HAP-1 (cell line): ENCODE measurements at regions of chr10 and their contacts with region 1.

Region 1: DNA sequence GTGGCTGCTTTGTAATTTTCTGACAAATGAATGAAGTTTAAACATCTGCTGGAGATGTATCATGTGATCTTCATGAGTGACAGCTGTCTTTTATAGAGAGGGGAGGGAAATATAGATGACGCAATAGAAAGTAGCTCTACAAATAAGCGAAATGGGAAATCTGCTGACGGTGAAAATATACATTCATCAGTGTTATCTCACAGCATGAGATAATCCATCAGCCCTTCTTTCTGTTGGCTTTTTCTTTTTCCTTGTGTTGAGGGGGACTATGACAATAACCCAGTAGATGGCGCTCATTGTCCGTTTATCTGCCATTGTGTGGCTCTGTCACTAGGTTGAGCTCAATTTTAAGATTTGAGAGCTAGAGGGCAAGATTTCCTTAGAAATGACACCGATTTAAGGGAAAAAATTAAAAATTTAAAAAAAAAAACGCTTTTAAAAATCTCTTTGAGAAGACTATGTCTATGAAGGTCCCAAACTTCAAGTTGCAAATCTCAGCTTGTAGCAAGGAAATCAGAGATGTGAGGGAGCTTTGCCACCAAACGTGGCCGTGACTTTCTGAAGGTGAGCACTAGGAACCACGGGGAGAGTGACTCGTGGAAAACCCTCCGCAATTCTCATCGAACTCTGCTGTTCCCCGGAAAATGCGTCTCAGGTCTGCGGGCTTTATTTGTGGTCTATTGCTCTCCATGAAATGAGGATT is 114.6 kb upstream of the SFMBT2 start:
- DNase-seq: peak; percentile 63 to 74
- H3K4me3 ChIP-seq: no peak overlapping the region
- H3K4me1 ChIP-seq: no peaks in the 10 kb centered on the region
- H3K27me3 ChIP-seq: peaks cover 31% of the 10 kb centered on the region

Region 2: DNA sequence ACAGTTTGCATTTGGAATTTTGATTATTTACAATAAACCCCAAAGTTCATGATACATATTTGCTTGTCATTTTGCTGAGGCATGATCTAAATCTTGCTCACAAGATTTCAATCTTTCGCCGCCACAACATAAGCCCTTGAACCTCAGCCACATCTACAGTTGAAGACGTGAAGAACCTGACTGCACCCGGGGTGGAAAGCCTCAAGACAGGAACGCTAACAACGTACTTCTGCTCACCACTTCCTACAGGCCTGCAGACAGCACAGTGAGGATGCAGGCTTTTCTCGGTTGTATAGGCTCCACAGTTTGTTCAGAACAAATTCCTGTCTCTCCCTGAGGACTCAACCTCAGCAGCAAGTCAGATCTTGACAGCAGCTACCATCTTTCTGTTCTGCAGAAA is 551.6 kb before region 1 on chr10:
- in situ Hi-C with region 1: no loop called
- DNase-seq: no peak
- H3K4me3 ChIP-seq: no peak overlapping the region
- H3K4me1 ChIP-seq: peaks cover 17% of the 10 kb centered on the region
- H3K27me3 ChIP-seq: no peaks in the 10 kb centered on the region

Region 3: GRCh38 chr10:7388602-7389001 is 136.9 kb before region 1 on chr10:
- in situ Hi-C with region 1: no loop called
- DNase-seq: no peak
- H3K4me3 ChIP-seq: no peak overlapping the region
- H3K4me1 ChIP-seq: peaks cover 16% of the 10 kb centered on the region; the same call in 1 of the 2 replicates
- H3K27me3 ChIP-seq: no peaks in the 10 kb centered on the region

Region 4: GRCh38 chr10:7687228-7687907 is 161.9 kb after region 1 on chr10:
- in situ Hi-C with region 1: loop called (anchors 10 kb)
- DNase-seq: peak; percentile 88 to 92
- H3K4me3 ChIP-seq: no peak overlapping the region
- H3K4me1 ChIP-seq: peaks cover 4% of the 10 kb centered on the region; the same call in 1 of the 2 replicates
- H3K27me3 ChIP-seq: peaks cover 3% of the 10 kb centered on the region; the same call in 1 of the 2 replicates

Region 5: GRCh38 chr10:7932301-7933036 is 407.0 kb after region 1 on chr10:
- in situ Hi-C with region 1: no loop called
- DNase-seq: no peak
- H3K4me3 ChIP-seq: no peak overlapping the region
- H3K4me1 ChIP-seq: no peaks in the 10 kb centered on the region
- H3K27me3 ChIP-seq: no peaks in the 10 kb centered on the region

Region 6: GRCh38 chr10:9302120-9302746 is 1776.8 kb after region 1 on chr10:
- in situ Hi-C with region 1: loop called (anchors 10 kb)
- DNase-seq: peak; percentile 30 to 38
- H3K4me3 ChIP-seq: no peak overlapping the region
- H3K4me1 ChIP-seq: no peaks in the 10 kb centered on the region
- H3K27me3 ChIP-seq: peaks cover 4% of the 10 kb centered on the region; the same call in 1 of the 2 replicates